ENCODE measurements at regions of chr7 and their contacts with region 1.

Region 1: GRCh38 chr7:52120917-52121316 is 804.3 kb upstream of the COBL start:
- DNase-seq: no peak
- ATAC-seq: no peak
- H3K4me3 Mint-ChIP-seq: no peak overlapping the region
- H3K27ac Mint-ChIP-seq: no peak overlapping the region
- H3K4me1 Mint-ChIP-seq: no peaks in the 10 kb centered on the region
- H3K27me3 Mint-ChIP-seq: no peaks in the 10 kb centered on the region
- CTCF ChIP-seq: no peak

Region 2: DNA sequence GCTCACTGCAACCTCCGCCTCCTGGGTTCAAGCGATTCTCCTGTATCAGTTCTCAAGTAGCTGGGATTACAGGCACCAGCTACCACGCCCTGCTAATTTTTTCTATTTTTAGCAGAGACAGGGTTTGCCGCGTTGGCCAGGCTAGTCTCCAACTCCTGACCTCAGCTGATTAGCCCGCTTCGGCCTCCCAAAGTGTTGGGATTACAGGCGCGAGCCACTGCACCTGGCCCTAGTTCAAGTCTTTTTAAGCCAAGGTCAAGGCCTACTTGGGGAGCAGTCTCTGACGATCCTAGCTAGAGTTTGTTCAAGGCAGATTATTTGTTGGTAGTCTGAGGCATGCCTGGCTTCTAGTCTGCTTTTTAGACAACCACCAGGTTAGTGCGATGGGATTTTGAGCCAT is 94.8 kb before region 1 on chr7:
- CTCF ChIA-PET with region 1: no interaction called
- POLR2A ChIA-PET with region 1: no interaction called
- intact Hi-C with region 1: no loop called
- DNase-seq: no peak
- ATAC-seq: no peak
- H3K4me3 Mint-ChIP-seq: no peak overlapping the region
- H3K27ac Mint-ChIP-seq: no peak overlapping the region
- H3K4me1 Mint-ChIP-seq: no peaks in the 10 kb centered on the region
- H3K27me3 Mint-ChIP-seq: no peaks in the 10 kb centered on the region
- CTCF ChIP-seq: no peak

Region 3: GRCh38 chr7:52184006-52184703 is 63.2 kb after region 1 on chr7:
- CTCF ChIA-PET with region 1: no interaction called
- POLR2A ChIA-PET with region 1: no interaction called
- intact Hi-C with region 1: loop called (anchors 10 kb)
- DNase-seq: no peak
- ATAC-seq: no peak
- H3K4me3 Mint-ChIP-seq: no peak overlapping the region
- H3K27ac Mint-ChIP-seq: no peak overlapping the region
- H3K4me1 Mint-ChIP-seq: no peaks in the 10 kb centered on the region
- H3K27me3 Mint-ChIP-seq: no peaks in the 10 kb centered on the region
- CTCF ChIP-seq: no peak